CD8-positive, alpha-beta T cell (primary cell): ENCODE measurements at regions of chr19 and their contacts with region 1.

Region 1: DNA sequence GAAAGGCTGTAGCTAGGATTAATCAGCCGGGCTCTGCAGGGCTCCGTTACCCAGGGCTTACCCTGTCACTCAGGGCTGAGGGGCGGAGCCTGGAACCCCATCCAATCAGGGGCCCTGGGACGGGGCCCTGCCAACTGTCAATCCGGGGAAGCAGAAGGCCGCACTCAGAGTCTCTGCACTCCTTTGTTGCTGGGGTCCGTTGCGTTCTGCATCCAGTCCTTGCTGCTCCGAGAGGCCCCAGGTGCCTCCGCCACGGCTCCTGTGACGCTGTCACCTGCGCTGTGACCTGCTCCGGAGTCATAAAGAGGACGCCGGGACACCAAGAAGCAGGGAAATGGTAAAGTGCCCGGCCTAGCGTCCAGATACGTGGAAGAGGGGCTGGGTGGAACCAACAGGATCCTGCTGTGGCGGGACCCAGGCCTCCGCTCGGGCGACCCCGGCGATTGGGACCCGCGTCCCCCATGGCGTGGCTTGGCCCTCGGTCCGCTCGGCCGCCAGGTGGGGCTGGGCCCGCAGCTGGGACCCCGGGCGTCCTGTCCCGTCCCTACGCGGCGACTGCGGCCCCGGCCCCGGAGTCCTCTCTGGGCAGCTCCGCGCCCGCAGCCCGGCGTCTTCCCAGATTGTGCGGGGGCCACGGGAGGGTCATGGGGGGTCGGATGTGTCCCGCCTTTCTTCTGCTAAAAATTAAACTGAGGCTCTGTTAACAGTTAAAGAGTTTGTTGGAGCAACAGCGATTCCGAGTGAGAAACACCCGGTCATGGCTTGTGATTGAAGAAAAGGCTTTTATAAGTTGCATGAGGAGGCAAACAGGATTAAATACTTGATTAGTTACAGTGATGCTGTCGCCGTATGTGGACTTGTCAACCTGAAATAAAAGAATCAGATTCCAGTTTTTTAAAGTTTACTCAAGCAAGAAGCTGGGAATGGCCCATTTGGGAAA is at the start of gene ZNF491:
- DNase-seq: peak; percentile 59 to 88 (median 84)
- ATAC-seq: peak; percentile 98
- H3K4me3 ChIP-seq: peak within 1 kb of the TSS; percentile 68 to 79
- H3K4me3 Mint-ChIP-seq: peak within 1 kb of the TSS; percentile 89
- H3K27ac ChIP-seq: peak within 1 kb of the TSS; percentile 57 to 63
- H3K27ac Mint-ChIP-seq: peak within 1 kb of the TSS; percentile 91
- H3K4me1 ChIP-seq: peaks cover 12% of the 10 kb centered on the region
- H3K4me1 Mint-ChIP-seq: peaks cover 17% of the 10 kb centered on the region
- H3K27me3 ChIP-seq: no peaks in the 10 kb centered on the region
- H3K27me3 Mint-ChIP-seq: no peaks in the 10 kb centered on the region
- CTCF ChIP-seq: peak; percentile 23
- total RNA-seq, gene ZNF491: 0.43 to 0.89 TPM

Region 2: DNA sequence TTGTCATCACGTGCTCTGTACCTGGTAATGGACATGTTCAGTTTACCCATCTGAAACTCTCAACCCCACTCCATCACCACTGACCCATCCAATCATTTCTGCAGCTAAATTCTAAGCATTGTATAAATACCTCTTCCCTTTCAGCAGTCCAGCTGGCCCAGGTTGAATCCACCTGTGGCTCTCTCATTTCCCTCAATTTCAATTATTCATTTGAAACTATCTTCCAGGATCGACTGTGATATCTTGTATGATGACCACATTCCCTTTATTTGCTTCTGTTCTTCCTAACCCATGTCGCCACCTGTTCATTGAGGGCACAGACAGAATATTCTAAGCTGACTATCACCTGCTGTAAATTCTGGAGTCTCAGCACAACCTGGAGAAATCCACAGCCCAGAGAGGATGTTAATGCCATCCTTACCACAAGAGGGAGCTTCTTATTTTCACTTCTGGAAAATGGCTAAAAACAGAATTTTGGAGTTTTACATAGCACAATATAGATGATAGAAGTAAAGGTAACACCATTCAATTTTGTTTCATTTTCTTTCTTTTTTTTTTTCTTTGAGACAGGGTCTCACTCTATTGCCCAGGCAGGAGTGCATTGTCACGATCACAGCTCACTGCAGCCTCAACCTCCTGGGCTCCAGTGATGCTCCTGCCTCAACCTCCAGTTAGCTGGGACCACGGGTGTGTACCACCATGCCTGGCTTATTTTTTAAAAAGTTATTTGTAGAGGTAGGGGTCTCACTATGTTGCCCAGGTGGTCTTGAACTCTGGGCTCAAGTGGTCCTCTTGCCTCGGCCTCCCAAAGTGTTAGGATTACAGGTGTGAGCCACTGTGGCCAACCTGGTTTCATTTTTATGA is 98.5 kb before region 1 on chr19:
- CTCF ChIA-PET with region 1: interaction called, 5 read pairs
- POLR2A ChIA-PET with region 1: no interaction called
- intact Hi-C with region 1: loop called in 1 of 2 experiments (anchors 10 kb)
- DNase-seq: peak in 3 of 9 experiments; percentile 5 to 48 (median 32)
- ATAC-seq: no peak
- H3K4me3 ChIP-seq: no peak overlapping the region
- H3K4me3 Mint-ChIP-seq: no peak overlapping the region
- H3K27ac ChIP-seq: no peak overlapping the region
- H3K27ac Mint-ChIP-seq: no peak overlapping the region
- H3K4me1 ChIP-seq: peaks cover 1% of the 10 kb centered on the region
- H3K4me1 Mint-ChIP-seq: no peaks in the 10 kb centered on the region
- H3K27me3 ChIP-seq: peaks cover 0 to 2% of the 10 kb centered on the region in 2 experiments
- H3K27me3 Mint-ChIP-seq: peaks cover 8% of the 10 kb centered on the region
- CTCF ChIP-seq: peak; percentile 69

Region 3: GRCh38 chr19:11787536-11787935 is 11.1 kb before region 1 on chr19:
- CTCF ChIA-PET with region 1: interaction called, 13 read pairs
- POLR2A ChIA-PET with region 1: no interaction called
- intact Hi-C with region 1: no loop called
- DNase-seq: no peak
- ATAC-seq: no peak
- H3K4me3 ChIP-seq: no peak overlapping the region
- H3K4me3 Mint-ChIP-seq: no peak overlapping the region
- H3K27ac ChIP-seq: no peak overlapping the region
- H3K27ac Mint-ChIP-seq: no peak overlapping the region
- H3K4me1 ChIP-seq: no peaks in the 10 kb centered on the region
- H3K4me1 Mint-ChIP-seq: no peaks in the 10 kb centered on the region
- H3K27me3 ChIP-seq: no peaks in the 10 kb centered on the region
- H3K27me3 Mint-ChIP-seq: no peaks in the 10 kb centered on the region
- CTCF ChIP-seq: no peak

Region 4: GRCh38 chr19:11833541-11833940 is 34.9 kb after region 1 on chr19:
- CTCF ChIA-PET with region 1: no interaction called
- POLR2A ChIA-PET with region 1: no interaction called
- intact Hi-C with region 1: no loop called
- DNase-seq: no peak
- ATAC-seq: no peak
- H3K4me3 ChIP-seq: peak overlapping the region in 1 of 2 experiments; percentile 21
- H3K4me3 Mint-ChIP-seq: no peak overlapping the region
- H3K27ac ChIP-seq: no peak overlapping the region
- H3K27ac Mint-ChIP-seq: no peak overlapping the region
- H3K4me1 ChIP-seq: no peaks in the 10 kb centered on the region
- H3K4me1 Mint-ChIP-seq: no peaks in the 10 kb centered on the region
- H3K27me3 ChIP-seq: no peaks in the 10 kb centered on the region
- H3K27me3 Mint-ChIP-seq: no peaks in the 10 kb centered on the region
- CTCF ChIP-seq: no peak

Region 5: GRCh38 chr19:11881151-11881800 is 82.6 kb after region 1 on chr19:
- CTCF ChIA-PET with region 1: interaction called, 18 read pairs
- POLR2A ChIA-PET with region 1: no interaction called
- intact Hi-C with region 1: loop called (anchors 1 to 5 kb)
- DNase-seq: peak; percentile 33 to 79 (median 66)
- ATAC-seq: peak; percentile 62
- H3K4me3 ChIP-seq: peak overlapping the region in 1 of 2 experiments; percentile 33
- H3K4me3 Mint-ChIP-seq: no peak overlapping the region
- H3K27ac ChIP-seq: no peak overlapping the region
- H3K27ac Mint-ChIP-seq: no peak overlapping the region
- H3K4me1 ChIP-seq: peaks cover 3% of the 10 kb centered on the region
- H3K4me1 Mint-ChIP-seq: peaks cover 2% of the 10 kb centered on the region
- H3K27me3 ChIP-seq: no peaks in the 10 kb centered on the region
- H3K27me3 Mint-ChIP-seq: no peaks in the 10 kb centered on the region
- CTCF ChIP-seq: peak; percentile 53

Region 6: GRCh38 chr19:11987405-11988281 is 189.0 kb after region 1 on chr19:
- CTCF ChIA-PET with region 1: interaction called, 28 read pairs
- POLR2A ChIA-PET with region 1: interaction called, 5 read pairs
- intact Hi-C with region 1: loop called (anchors 1 kb)
- DNase-seq: peak; percentile 82 to 94 (median 91)
- ATAC-seq: peak; percentile 92
- H3K4me3 ChIP-seq: peak overlapping the region; percentile 89 to 98
- H3K4me3 Mint-ChIP-seq: peak overlapping the region; percentile 99
- H3K27ac ChIP-seq: peak overlapping the region; percentile 79 to 83
- H3K27ac Mint-ChIP-seq: peak overlapping the region; percentile 91
- H3K4me1 ChIP-seq: peaks cover 10% of the 10 kb centered on the region
- H3K4me1 Mint-ChIP-seq: peaks cover 26% of the 10 kb centered on the region
- H3K27me3 ChIP-seq: no peaks in the 10 kb centered on the region
- H3K27me3 Mint-ChIP-seq: no peaks in the 10 kb centered on the region
- CTCF ChIP-seq: no peak

Region 7: DNA sequence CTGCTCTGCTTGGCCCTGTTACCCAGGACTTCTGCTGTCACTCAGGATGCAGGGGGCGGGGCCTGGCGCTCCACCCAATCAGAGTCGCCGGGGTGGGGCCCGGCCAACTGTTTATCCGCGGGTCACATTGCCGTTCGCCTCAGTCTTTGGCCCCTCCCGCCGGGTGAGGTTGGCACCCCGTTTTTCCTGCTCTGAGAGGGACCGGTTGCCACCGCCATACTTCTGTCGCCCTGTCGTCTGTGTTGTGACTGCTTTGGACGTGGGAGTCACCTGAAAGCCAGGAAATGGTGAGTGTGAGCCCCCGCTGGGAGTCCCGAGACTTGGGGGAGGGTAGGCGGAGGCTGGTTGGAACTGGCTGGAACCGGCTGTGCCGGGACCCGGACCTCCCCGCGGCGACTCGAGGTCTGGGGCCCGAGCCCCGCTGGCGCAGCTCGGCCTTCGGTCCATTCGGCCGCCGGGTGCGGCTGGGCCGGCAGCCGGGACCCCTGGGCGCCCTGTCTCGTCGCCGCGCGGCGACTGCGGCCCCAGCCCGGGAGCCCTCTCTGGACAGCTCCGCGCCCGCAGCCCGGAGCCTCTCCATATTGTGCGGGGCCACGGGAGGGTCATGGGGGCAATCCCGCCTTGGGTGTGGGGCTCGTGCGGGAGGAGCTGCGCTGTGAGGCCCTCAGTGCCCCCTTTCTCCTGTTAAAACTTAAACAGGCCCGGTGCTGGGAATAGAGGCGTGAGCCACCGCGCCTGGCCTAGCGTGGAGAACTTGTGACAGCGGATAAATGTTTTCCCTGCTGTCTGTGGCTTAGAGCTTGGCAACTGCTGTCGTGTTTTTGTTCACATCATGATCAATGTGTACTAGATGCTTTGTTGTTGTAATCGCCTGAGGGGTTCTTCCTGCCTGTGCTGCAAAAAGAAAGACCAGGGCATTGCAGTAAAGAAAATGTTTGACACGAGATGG is 266.2 kb after region 1 on chr19 and contains the start of gene ZNF844:
- CTCF ChIA-PET with region 1: interaction called, 12 read pairs
- POLR2A ChIA-PET with region 1: no interaction called
- intact Hi-C with region 1: no loop called
- DNase-seq: peak; percentile 59 to 83 (median 69)
- ATAC-seq: peak; percentile 84
- H3K4me3 ChIP-seq: peak within 1 kb of the TSS; percentile 66 to 71
- H3K4me3 Mint-ChIP-seq: peak within 1 kb of the TSS; percentile 89
- H3K27ac ChIP-seq: peak within 1 kb of the TSS; percentile 69 to 71
- H3K27ac Mint-ChIP-seq: peak within 1 kb of the TSS; percentile 82
- H3K4me1 ChIP-seq: peaks cover 8% of the 10 kb centered on the region
- H3K4me1 Mint-ChIP-seq: peaks cover 11% of the 10 kb centered on the region
- H3K27me3 ChIP-seq: no peaks in the 10 kb centered on the region
- H3K27me3 Mint-ChIP-seq: no peaks in the 10 kb centered on the region
- CTCF ChIP-seq: no peak
- total RNA-seq, gene ZNF844: 12.1 to 14.6 TPM

Region 8: DNA sequence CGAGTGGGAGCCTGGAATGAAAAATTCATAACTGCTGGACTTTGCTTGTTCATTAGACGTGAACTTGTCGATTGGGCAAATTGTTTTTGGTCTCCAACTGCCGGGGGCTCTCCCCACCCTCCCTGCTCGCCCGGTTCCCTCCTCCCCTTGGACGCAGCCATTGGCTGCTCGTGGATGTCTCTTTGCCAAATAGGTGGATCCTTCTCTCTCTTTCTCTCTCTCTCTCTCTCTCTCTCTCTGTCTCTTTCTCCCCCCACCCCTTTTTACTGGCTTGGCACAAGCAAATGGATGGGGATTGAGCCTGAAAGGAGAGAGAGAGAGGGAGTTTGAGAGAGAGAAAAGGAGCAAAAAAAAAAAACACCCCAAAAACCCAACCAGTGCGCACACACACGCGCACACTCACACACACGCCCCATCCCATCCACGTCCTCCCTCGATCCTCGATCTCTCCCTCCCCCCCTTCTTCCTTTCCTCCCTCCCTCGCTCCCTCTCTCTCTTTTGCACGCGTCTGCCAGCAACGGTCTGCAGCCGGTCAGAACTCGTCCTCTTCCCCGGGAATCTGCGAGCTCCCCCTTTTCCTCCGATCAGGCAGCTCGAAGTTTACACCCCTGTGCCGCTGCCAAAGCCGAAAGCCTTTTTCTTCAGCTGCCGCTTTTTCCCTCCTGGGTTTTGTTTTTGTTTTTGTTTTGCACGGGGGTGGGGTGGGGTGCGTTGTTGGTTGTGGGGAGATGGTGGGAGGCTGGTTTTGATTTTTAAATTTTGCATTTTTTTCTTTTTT is 1224.4 kb after region 1 on chr19:
- CTCF ChIA-PET with region 1: no interaction called
- POLR2A ChIA-PET with region 1: no interaction called
- intact Hi-C with region 1: no loop called
- DNase-seq: peak in 2 of 9 experiments; percentile 11 to 30
- ATAC-seq: no peak
- H3K4me3 ChIP-seq: peak overlapping the region in 1 of 2 experiments; percentile 31
- H3K4me3 Mint-ChIP-seq: peak overlapping the region; percentile 65
- H3K27ac ChIP-seq: no peak overlapping the region
- H3K27ac Mint-ChIP-seq: no peak overlapping the region
- H3K4me1 ChIP-seq: peaks cover 16% of the 10 kb centered on the region
- H3K4me1 Mint-ChIP-seq: peaks cover 18% of the 10 kb centered on the region
- H3K27me3 ChIP-seq: peaks cover 3 to 21% of the 10 kb centered on the region in 2 experiments
- H3K27me3 Mint-ChIP-seq: peaks cover 36% of the 10 kb centered on the region
- CTCF ChIP-seq: no peak